SK-N-SH (cell line): ENCODE measurements at regions of chr11 and their contacts with region 1.

Region 1: GRCh38 chr11:110463153-110463552 is 33.4 kb downstream of the FDX1 start:
- DNase-seq: peak; percentile 49
- H3K4me3 ChIP-seq: no peak overlapping the region; a peak in 1 of 4 replicates
- H3K27ac ChIP-seq: no peak overlapping the region
- H3K4me1 ChIP-seq: no peaks in the 10 kb centered on the region; a peak in 1 of 4 replicates
- H3K27me3 ChIP-seq: no peaks in the 10 kb centered on the region
- CTCF ChIP-seq: peak; percentile 69
- EP300 ChIP-seq: no peak
- RAD21 ChIP-seq: peak; percentile 84

Region 2: DNA sequence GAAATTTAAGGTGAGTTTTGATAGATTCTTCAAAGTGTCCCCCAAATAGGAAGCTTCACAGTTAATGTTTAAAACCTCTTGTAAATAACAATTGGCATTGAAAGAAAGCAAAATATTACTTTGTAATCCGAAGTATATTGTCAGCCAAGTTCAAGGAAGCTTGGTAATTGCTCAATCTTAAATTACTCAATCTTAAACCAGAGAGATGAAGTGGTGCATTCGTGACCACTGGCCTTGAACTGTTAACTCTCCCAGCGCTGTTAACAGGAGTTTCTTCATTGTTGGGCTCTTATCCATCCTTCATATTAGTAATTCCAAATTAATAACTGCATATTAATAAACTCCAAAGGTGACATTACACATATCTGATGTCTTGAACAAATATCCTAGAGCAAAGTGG is 54.0 kb before region 1 on chr11:
- CTCF ChIA-PET with region 1: no interaction called
- POLR2A ChIA-PET with region 1: no interaction called
- DNase-seq: no peak
- H3K4me3 ChIP-seq: no peak overlapping the region
- H3K27ac ChIP-seq: no peak overlapping the region
- H3K4me1 ChIP-seq: no peaks in the 10 kb centered on the region
- H3K27me3 ChIP-seq: no peaks in the 10 kb centered on the region
- CTCF ChIP-seq: no peak
- EP300 ChIP-seq: no peak
- RAD21 ChIP-seq: no peak

Region 3: GRCh38 chr11:110473706-110474105 is 10.6 kb after region 1 on chr11:
- CTCF ChIA-PET with region 1: interaction called, 15 read pairs
- POLR2A ChIA-PET with region 1: no interaction called
- DNase-seq: no peak
- H3K4me3 ChIP-seq: no peak overlapping the region
- H3K27ac ChIP-seq: no peak overlapping the region
- H3K4me1 ChIP-seq: peaks cover 3 to 14% of the 10 kb centered on the region in 2 experiments
- H3K27me3 ChIP-seq: no peaks in the 10 kb centered on the region
- CTCF ChIP-seq: no peak
- EP300 ChIP-seq: no peak
- RAD21 ChIP-seq: no peak

Region 4: DNA sequence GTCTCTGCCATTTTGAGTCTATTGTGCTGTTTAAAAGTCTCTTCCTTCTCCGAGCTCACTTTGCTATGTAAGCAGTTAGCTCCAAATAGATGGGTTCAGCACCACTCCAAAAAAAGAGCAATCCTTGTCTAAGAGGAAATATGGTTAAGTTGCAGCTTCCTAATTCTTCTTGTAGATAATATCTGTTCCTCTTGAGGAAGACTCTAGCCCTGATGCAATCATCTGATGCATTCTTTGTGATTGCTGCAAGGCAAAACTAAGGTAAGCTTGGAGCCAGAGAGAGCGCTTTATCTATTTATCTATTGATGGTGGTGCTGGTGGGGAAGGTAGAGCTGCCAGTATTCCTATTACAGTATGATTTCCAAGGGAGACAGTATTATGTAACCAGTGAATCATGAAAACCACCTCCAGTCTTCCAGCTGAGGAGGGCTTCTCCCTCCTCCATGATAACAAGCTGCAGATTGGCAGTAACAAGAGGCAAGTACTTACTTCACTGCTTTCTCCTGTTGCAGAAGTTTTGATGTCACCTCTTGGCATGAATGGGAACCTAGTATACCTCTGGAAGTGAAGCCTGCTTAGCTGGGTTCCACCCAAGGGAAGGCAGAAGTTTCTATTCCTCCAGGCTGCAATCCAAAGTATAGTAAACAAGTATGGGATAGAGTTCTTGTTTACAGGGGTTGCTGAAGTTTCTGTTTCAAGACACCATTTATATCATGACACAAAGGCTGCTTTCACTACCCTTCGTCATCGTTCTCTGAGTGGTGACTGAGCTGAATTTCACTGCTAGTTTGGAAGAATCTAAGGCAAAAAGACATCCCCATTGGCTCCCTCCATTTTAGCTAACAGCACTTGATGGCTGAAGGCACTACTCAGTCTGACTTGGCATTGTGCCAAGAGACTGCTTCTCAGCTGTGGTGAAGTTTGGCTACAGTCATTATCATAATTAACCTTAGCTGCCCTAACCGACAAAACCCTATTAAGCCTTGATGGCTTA is 16.3 kb after region 1 on chr11:
- CTCF ChIA-PET with region 1: interaction called, 15 read pairs
- POLR2A ChIA-PET with region 1: no interaction called
- DNase-seq: no peak
- H3K4me3 ChIP-seq: no peak overlapping the region
- H3K27ac ChIP-seq: no peak overlapping the region
- H3K4me1 ChIP-seq: peaks cover 0 to 3% of the 10 kb centered on the region in 2 experiments; a peak in 3 of 4 replicates
- H3K27me3 ChIP-seq: no peaks in the 10 kb centered on the region
- CTCF ChIP-seq: no peak
- EP300 ChIP-seq: no peak
- RAD21 ChIP-seq: no peak

Region 5: DNA sequence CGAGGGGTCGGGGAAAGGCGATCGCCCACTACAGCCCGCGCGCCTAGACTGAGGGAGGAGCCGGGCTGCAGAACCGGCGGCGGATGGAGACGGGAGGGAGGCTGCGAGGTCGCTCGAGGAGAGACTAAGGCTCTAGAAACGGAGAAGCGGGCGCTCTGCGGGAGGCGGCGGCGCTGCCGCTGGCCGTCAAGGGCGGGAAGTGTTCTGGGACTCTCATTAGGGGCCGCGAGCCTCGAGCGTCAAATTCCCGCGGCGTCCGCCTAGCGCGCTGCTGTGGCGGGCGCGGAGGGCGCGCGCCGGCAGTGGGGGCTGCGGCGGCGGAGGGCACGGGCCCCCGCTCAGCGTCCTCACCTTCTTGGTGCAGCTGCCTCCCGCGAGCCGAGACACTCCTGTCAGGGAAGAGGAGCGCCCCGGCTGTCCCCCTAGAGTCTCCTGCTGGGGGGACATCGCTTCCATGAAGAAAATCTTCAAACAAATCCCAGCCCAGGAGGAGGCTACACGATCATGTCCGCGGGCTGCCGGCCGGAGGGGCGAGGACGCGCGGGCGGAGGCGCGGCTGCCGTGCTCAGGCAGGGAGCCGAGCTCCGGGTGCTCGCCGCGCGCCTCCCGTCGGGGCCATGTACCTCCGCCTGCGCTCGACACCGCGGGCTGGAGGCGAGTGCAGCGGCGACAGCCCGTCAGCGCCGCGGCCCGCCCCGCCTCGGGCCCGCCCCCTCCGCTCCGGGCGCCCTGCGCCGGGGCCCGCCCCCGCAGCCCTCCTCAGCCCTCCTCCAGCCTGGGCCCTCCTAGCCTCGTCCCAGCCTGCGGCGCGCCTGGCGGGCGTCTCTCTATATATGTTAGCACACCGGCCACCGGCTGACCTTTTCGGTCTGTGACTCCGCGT is 248.9 kb after region 1 on chr11 and contains the start of gene ARHGAP20:
- CTCF ChIA-PET with region 1: interaction called, 10 read pairs
- POLR2A ChIA-PET with region 1: no interaction called
- DNase-seq: peak; percentile 87
- H3K4me3 ChIP-seq: peak within 1 kb of the TSS; percentile 58 to 64
- H3K27ac ChIP-seq: peak within 1 kb of the TSS in 1 of 2 experiments; percentile 36; a peak in 2 of 4 replicates
- H3K4me1 ChIP-seq: peaks cover 0 to 19% of the 10 kb centered on the region in 2 experiments; a peak in 2 of 4 replicates
- H3K27me3 ChIP-seq: no peaks in the 10 kb centered on the region; the same call in 1 of the 2 replicates
- CTCF ChIP-seq: no peak
- EP300 ChIP-seq: no peak
- RAD21 ChIP-seq: no peak
- polyA plus RNA-seq, gene ARHGAP20: 0.76 and 0.78 TPM in 2 replicates

Region 6: DNA sequence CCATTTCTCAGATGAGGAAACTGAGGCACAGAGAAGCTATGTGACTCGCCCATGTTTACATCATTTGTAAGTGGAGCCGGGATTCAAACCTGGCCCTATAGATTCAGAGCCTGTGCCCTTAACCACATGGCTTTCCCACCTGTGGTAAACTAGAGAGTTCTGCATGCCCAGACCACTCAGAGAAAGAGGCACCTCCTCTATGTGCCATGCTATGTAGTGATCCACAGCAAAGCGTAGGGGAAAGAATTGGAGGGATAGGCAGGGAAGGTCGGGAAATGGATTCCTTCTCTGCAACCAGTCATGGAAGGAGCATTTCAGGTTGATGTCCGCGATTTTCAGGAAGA is 766.9 kb after region 1 on chr11:
- CTCF ChIA-PET with region 1: interaction called, 74 read pairs
- POLR2A ChIA-PET with region 1: no interaction called
- DNase-seq: no peak
- H3K4me3 ChIP-seq: peak overlapping the region; percentile 33 to 56; a peak in 3 of 4 replicates
- H3K27ac ChIP-seq: no peak overlapping the region
- H3K4me1 ChIP-seq: peaks cover 0 to 3% of the 10 kb centered on the region in 2 experiments; a peak in 1 of 4 replicates
- H3K27me3 ChIP-seq: no peaks in the 10 kb centered on the region
- CTCF ChIP-seq: no peak
- EP300 ChIP-seq: no peak
- RAD21 ChIP-seq: no peak